Activated B cell treated with CpG ODN at 0.5 μM for 24 hours (primary cell): ENCODE measurements at regions of chr2 and their contacts with region 1.

Region 1: GRCh38 chr2:119366649-119367471 is at the starts of genes C2orf76 and DBI:
- DNase-seq: peak; percentile 93
- ATAC-seq: peak; percentile 92
- H3K4me3 Mint-ChIP-seq: peak within 1 kb of the TSS; percentile 100
- H3K27ac Mint-ChIP-seq: peak within 1 kb of the TSS; percentile 95
- H3K4me1 Mint-ChIP-seq: peaks cover 56% of the 10 kb centered on the region
- H3K27me3 Mint-ChIP-seq: no peaks in the 10 kb centered on the region
- CTCF ChIP-seq: no peak
- total RNA-seq, gene C2orf76: 10.0 and 11.0 TPM in 2 replicates
- total RNA-seq, gene DBI: 112 TPM in 2 replicates

Region 2: DNA sequence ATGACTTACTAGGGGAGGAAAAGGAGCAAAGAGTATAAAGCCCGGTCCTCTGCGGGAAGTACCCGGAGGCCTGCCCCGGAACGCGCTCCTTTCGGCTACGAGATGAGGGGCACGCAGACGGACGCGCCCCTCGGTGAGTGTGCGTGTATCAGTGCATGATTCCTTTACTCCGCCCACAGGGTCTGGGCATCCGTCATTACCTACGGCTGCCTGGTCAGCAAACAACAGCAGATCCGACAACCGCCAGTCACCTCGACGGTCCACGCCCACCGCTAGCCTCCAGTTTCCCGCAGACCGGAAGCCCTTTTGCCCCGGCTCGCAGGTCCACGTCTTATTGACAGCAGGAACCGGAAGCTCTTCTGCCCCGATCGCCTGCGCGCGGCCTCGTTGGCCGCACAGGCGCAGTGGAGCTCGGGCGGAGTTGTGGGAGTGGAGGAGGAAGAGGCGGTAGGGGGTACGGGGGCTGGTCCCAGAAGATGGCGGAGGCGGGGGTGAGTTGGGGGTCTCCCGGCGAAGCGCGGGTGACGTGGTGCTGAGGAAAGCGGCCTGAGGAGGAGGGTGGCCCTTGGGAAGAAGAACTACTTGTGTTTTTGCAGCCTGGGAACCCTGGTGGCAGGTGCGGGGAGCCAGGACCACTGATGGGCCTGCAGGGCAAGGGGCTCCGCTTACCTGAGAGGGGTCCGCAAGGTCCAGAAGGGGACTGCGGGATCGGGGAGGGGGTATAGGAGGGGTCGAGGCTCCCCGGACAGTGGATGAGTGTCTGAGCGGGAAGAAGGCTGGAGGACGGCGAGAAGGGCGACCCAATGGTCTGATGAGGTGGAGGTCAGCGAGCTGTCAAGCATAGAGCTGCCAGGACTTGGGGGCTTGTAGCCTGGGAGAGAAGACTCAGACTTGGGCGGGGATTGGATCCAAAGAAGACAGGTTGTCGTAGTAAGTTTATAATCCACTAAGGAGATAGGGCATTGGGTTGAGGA is 1278.5 kb before region 1 on chr2 and contains the start of gene INSIG2:
- CTCF ChIA-PET with region 1: no interaction called
- POLR2A ChIA-PET with region 1: no interaction called
- intact Hi-C with region 1: loop called (anchors 1 kb)
- DNase-seq: peak; percentile 88
- ATAC-seq: peak; percentile 84
- H3K4me3 Mint-ChIP-seq: peak within 1 kb of the TSS; percentile 94
- H3K27ac Mint-ChIP-seq: peak within 1 kb of the TSS; percentile 84
- H3K4me1 Mint-ChIP-seq: peaks cover 32% of the 10 kb centered on the region
- H3K27me3 Mint-ChIP-seq: no peaks in the 10 kb centered on the region
- CTCF ChIP-seq: no peak
- total RNA-seq, gene INSIG2: 16.8 and 16.9 TPM in 2 replicates

Region 3: GRCh38 chr2:118309946-118310680 is 1056.7 kb before region 1 on chr2:
- CTCF ChIA-PET with region 1: no interaction called
- POLR2A ChIA-PET with region 1: no interaction called
- intact Hi-C with region 1: loop called (anchors 10 kb)
- DNase-seq: peak; percentile 23
- ATAC-seq: peak; percentile 52
- H3K4me3 Mint-ChIP-seq: peak overlapping the region; percentile 83
- H3K27ac Mint-ChIP-seq: peak overlapping the region; percentile 70
- H3K4me1 Mint-ChIP-seq: peaks cover 2% of the 10 kb centered on the region
- H3K27me3 Mint-ChIP-seq: peaks cover 42% of the 10 kb centered on the region
- CTCF ChIP-seq: no peak

Region 4: DNA sequence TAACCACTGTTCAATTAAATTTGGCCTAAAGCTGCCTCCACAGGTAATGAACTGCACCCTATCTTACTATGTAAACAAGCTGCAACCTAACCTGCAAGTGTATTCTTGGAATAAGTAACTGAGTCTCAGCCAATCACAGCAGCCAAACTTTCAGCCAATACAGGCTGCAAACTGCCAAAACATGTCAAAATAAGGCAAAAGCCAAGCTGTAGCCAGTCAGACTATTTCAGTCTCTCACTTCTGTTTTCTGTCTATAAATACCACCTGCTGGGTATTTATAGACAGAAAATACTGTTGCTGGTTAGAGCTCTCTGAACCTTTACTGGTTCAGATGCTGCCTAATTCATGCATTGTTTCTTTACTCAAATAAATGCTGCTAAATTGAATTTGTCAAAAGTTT is 14.5 kb before region 1 on chr2:
- CTCF ChIA-PET with region 1: interaction called, 3 read pairs
- POLR2A ChIA-PET with region 1: interaction called, 14 read pairs
- intact Hi-C with region 1: loop called (anchors 1 kb)
- DNase-seq: no peak
- ATAC-seq: peak; percentile 61
- H3K4me3 Mint-ChIP-seq: no peak overlapping the region
- H3K27ac Mint-ChIP-seq: no peak overlapping the region
- H3K4me1 Mint-ChIP-seq: peaks cover 45% of the 10 kb centered on the region
- H3K27me3 Mint-ChIP-seq: no peaks in the 10 kb centered on the region
- CTCF ChIP-seq: no peak

Region 5: GRCh38 chr2:119449521-119449920 is 82.7 kb after region 1 on chr2:
- CTCF ChIA-PET with region 1: no interaction called
- POLR2A ChIA-PET with region 1: no interaction called
- intact Hi-C with region 1: no loop called
- DNase-seq: no peak
- ATAC-seq: no peak
- H3K4me3 Mint-ChIP-seq: no peak overlapping the region
- H3K27ac Mint-ChIP-seq: no peak overlapping the region
- H3K4me1 Mint-ChIP-seq: no peaks in the 10 kb centered on the region
- H3K27me3 Mint-ChIP-seq: peaks cover 39% of the 10 kb centered on the region
- CTCF ChIP-seq: no peak

Region 6: GRCh38 chr2:119531292-119531691 is 164.4 kb after region 1 on chr2:
- CTCF ChIA-PET with region 1: no interaction called
- POLR2A ChIA-PET with region 1: no interaction called
- intact Hi-C with region 1: no loop called
- DNase-seq: no peak
- ATAC-seq: no peak
- H3K4me3 Mint-ChIP-seq: no peak overlapping the region
- H3K27ac Mint-ChIP-seq: no peak overlapping the region
- H3K4me1 Mint-ChIP-seq: no peaks in the 10 kb centered on the region
- H3K27me3 Mint-ChIP-seq: peaks cover 21% of the 10 kb centered on the region
- CTCF ChIP-seq: no peak

Region 7: GRCh38 chr2:119759451-119760236 is 392.8 kb after region 1 on chr2 and contains the start of gene PTPN4:
- CTCF ChIA-PET with region 1: no interaction called
- POLR2A ChIA-PET with region 1: interaction called, 6 read pairs
- intact Hi-C with region 1: loop called (anchors 1 kb)
- DNase-seq: peak; percentile 87
- ATAC-seq: peak; percentile 93
- H3K4me3 Mint-ChIP-seq: peak within 1 kb of the TSS; percentile 95
- H3K27ac Mint-ChIP-seq: peak within 1 kb of the TSS; percentile 89
- H3K4me1 Mint-ChIP-seq: peaks cover 41% of the 10 kb centered on the region
- H3K27me3 Mint-ChIP-seq: no peaks in the 10 kb centered on the region
- CTCF ChIP-seq: no peak
- total RNA-seq, gene PTPN4: 28.8 and 41.2 TPM in 2 replicates

Region 8: DNA sequence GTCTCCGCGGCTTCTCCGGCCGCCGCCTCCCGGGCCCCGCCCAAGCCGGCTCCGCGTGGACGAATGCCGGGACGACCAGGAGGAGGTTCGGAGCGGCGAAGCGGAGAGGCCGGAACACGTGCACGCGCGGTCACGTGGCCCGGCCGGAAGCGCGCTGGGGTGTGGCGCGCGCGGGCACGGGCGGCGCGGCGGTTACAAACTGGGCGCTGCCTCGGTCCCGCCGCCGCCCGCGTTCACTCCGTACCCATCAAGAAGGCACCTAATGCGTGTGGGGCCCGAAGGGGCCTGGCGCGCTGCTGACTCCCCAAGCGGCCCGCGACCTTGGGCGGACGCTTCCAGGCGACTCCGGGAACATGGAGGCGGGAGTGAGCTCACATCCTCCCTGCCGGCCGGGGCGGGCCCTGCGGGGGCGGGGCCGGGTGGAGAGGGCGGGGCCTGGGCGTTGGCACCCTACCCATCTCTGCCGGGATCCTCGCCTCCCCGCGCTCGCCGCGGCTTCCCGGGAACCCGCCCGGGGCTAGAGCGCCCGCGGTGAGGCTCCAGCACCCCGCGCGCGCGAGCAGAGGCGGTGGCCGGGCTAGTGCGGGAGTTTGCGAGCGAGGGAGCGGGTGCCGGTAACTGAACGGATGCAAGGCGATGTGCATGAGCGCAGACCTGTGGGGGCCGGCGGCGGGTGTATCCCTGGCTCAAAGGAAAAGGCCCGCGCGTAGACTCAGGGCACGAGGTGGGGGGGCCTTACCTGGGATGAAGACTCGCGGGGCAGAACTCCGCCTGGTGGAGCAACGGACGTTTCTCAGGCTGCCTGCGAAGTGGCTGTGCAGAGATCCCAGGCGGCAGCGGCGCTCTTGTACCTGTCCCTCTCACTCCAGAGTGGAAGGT is 856.4 kb after region 1 on chr2 and contains the start of gene TMEM185B:
- CTCF ChIA-PET with region 1: no interaction called
- POLR2A ChIA-PET with region 1: no interaction called
- intact Hi-C with region 1: loop called (anchors 10 kb)
- DNase-seq: peak; percentile 97
- ATAC-seq: peak; percentile 96
- H3K4me3 Mint-ChIP-seq: peak within 1 kb of the TSS; percentile 87
- H3K27ac Mint-ChIP-seq: peak within 1 kb of the TSS; percentile 90
- H3K4me1 Mint-ChIP-seq: peaks cover 56% of the 10 kb centered on the region
- H3K27me3 Mint-ChIP-seq: no peaks in the 10 kb centered on the region
- CTCF ChIP-seq: no peak
- total RNA-seq, gene TMEM185B: 25.6 and 26.8 TPM in 2 replicates